Stomach (tissue), 19 donors: ENCODE measurements at regions of chr17 and their contacts with region 1.

Region 1: DNA sequence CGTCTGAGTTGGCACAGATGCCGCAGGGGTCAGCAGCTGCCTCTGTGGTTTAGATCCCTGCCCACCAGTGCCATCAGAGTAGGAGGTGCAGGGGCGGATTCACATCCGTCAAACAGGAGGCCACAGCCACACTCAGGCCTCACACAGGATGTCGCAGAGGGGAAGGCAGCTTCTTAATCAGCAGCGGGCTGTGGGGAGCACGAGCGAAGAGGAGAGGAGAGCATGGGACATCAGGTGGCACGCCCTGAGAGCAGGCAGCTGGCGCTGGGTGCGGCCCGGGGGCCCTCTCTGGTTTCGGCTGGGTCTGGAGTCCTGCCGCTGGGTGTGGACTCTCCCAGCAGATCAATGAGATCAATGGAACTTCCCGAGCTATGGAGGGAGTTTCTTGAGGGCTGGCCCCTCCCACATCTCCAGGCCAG is 9.6 kb downstream of the LLGL2 start:
- DNase-seq: peak; percentile 53 to 87
- H3K4me3 ChIP-seq: no peak overlapping the region
- H3K27ac ChIP-seq: peak overlapping the region; percentile 1 to 76 (median 38)
- H3K4me1 ChIP-seq: peaks cover 32 to 85% (median 56%) of the 10 kb centered on the region in 4 donors
- H3K27me3 ChIP-seq: no peaks in the 10 kb centered on the region
- CTCF ChIP-seq: no peak
- EP300 ChIP-seq: no peak
- POLR2A ChIP-seq: no peak

Region 2: GRCh38 chr17:75228305-75228704 is 306.8 kb before region 1 on chr17:
- intact Hi-C with region 1: no loop called
- DNase-seq: no peak
- H3K4me3 ChIP-seq: no peak overlapping the region
- H3K27ac ChIP-seq: peak overlapping the region in 4 of 5 donors; percentile 20 to 54 (median 32)
- H3K4me1 ChIP-seq: peaks cover 0 to 11% (median 2%) of the 10 kb centered on the region in 4 donors
- H3K27me3 ChIP-seq: no peaks in the 10 kb centered on the region
- CTCF ChIP-seq: no peak
- EP300 ChIP-seq: no peak
- POLR2A ChIP-seq: no peak

Region 3: GRCh38 chr17:75589012-75589918 is 54.1 kb after region 1 on chr17:
- intact Hi-C with region 1: loop called (anchors 10 kb)
- DNase-seq: peak; percentile 96 to 97
- H3K4me3 ChIP-seq: peak overlapping the region; percentile 60 to 68 (median 64)
- H3K27ac ChIP-seq: peak overlapping the region; percentile 87 to 98 (median 91)
- H3K4me1 ChIP-seq: peaks cover 24 to 40% (median 32%) of the 10 kb centered on the region in 4 donors
- H3K27me3 ChIP-seq: no peaks in the 10 kb centered on the region
- CTCF ChIP-seq: peak in 5 of 7 experiments; percentile 6 to 91 (median 79)
- EP300 ChIP-seq: no peak
- POLR2A ChIP-seq: no peak